Natural killer cell (primary cell): ENCODE measurements at regions of chr11 and their contacts with region 1.

Region 1: DNA sequence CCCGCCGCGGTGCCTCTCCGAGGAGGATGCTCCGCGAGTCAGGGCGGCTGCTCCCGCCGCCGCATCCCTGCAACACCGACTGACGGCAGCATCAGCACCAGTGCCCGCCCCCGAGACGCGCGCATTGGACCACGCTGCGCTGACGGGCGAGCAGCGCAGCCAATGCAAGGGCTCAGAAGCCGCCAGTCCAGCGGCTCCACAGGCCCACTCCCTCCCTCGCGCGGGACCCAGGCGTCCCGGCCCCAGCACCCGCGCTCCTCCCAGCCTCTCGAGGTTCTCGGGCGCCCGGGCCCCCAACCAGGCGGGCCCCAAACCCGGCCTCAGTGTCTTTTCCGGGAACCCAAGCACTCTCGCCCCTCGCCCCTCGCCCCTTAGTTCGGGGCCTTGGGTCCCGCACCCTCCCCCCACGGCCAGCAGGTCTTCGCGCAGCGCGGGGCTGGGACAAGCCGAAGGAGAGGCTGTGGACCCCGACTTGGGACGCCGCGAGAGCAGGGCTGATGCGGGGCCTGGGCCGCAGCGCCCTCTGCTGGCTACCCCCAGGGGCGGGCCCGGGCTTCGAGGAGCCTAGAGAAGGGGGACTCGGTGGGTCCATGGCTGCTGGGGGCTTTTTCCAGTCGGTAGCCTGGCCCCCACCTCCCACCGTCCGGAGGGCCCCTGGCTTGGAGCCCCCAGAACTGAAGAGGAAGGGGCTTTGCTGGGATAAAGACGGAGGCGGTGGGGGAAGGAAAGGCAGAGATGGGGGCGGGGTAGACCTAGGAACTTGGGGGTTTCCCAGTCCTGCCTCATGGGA is at the start of gene NRXN2:
- DNase-seq: peak; percentile 78 to 93
- ATAC-seq: peak; percentile 93 to 96 (median 95)
- H3K4me3 ChIP-seq: peak within 1 kb of the TSS; percentile 82
- H3K4me3 Mint-ChIP-seq: peak within 1 kb of the TSS; percentile 73
- H3K27ac ChIP-seq: peak within 1 kb of the TSS; percentile 82
- H3K27ac Mint-ChIP-seq: peak within 1 kb of the TSS in 1 of 2 donors; percentile 58
- H3K4me1 ChIP-seq: peaks cover 16% of the 10 kb centered on the region
- H3K4me1 Mint-ChIP-seq: peaks cover 8 to 29% of the 10 kb centered on the region in 2 donors
- H3K27me3 ChIP-seq: peaks cover 6% of the 10 kb centered on the region
- H3K27me3 Mint-ChIP-seq: peaks cover 0 to 18% of the 10 kb centered on the region in 2 donors
- CTCF ChIP-seq: peak; percentile 99
- total RNA-seq, gene NRXN2: 2.9 to 9.6 (median 7.7) TPM

Region 2: DNA sequence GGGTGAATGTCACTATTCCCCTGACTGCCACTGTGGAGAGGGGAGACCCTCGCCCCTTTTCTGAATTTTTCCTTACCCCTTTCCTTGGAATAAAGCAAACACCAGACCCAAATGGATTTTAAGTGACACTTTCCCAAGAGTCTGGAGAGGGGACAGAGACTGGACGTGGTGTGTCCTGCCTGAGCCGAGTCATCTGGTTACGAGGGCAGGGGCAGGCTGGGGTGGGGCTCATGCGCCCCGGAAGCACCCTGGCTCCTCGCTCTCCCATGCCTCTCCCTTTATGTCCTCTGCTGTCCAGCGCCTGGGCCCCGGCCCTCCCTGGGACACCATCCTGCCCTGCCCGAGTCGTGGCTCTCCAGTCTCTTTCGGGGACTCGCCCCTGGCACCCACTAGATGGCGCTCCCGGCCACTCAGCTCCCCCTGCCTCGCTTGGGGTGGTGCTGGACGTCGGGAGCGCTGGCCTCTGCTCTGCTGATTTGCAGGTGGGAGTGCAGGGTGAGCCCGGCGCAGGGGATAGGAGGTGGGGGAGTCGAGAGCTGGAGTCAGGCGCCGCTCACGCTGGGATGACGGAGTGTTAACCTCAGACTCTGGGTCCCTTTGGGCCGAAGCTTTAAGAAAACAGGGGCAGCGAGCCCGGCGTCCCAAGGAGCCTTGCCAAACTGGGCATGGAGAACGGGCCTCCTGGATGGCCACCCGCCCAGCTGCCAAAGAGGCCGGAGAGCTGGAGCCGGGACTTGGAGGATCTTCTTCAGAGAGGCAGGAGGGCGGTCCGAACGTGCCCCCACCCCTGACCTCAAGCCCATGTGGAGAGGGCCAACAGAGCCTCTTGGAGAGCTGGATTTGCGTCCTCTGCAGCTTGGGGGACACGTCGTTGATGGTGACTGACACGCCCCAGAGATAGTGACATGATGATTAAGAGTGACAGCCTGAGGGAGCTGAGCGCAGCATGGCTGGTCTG is 274.4 kb before region 1 on chr11:
- intact Hi-C with region 1: loop called (anchors 5 kb)
- DNase-seq: peak; percentile 72 to 80
- ATAC-seq: peak; percentile 80 to 85 (median 83)
- H3K4me3 ChIP-seq: peak overlapping the region; percentile 15
- H3K4me3 Mint-ChIP-seq: peak overlapping the region; percentile 79
- H3K27ac ChIP-seq: no peak overlapping the region
- H3K27ac Mint-ChIP-seq: peak overlapping the region in 1 of 2 donors; percentile 75
- H3K4me1 ChIP-seq: peaks cover 22% of the 10 kb centered on the region
- H3K4me1 Mint-ChIP-seq: peaks cover 14 to 19% of the 10 kb centered on the region in 2 donors
- H3K27me3 ChIP-seq: no peaks in the 10 kb centered on the region
- H3K27me3 Mint-ChIP-seq: peaks cover 5 to 17% of the 10 kb centered on the region in 2 donors
- CTCF ChIP-seq: peak; percentile 54

Region 3: GRCh38 chr11:64489831-64490441 is 233.4 kb before region 1 on chr11:
- intact Hi-C with region 1: loop called (anchors 5 kb)
- DNase-seq: peak; percentile 37 to 59
- ATAC-seq: peak; percentile 49 to 74 (median 68)
- H3K4me3 ChIP-seq: no peak overlapping the region
- H3K4me3 Mint-ChIP-seq: no peak overlapping the region
- H3K27ac ChIP-seq: no peak overlapping the region
- H3K27ac Mint-ChIP-seq: peak overlapping the region in 1 of 2 donors; percentile 54
- H3K4me1 ChIP-seq: peaks cover 4% of the 10 kb centered on the region
- H3K4me1 Mint-ChIP-seq: peaks cover 9 to 18% of the 10 kb centered on the region in 2 donors
- H3K27me3 ChIP-seq: no peaks in the 10 kb centered on the region
- H3K27me3 Mint-ChIP-seq: peaks cover 21 to 49% of the 10 kb centered on the region in 2 donors
- CTCF ChIP-seq: peak; percentile 50

Region 4: DNA sequence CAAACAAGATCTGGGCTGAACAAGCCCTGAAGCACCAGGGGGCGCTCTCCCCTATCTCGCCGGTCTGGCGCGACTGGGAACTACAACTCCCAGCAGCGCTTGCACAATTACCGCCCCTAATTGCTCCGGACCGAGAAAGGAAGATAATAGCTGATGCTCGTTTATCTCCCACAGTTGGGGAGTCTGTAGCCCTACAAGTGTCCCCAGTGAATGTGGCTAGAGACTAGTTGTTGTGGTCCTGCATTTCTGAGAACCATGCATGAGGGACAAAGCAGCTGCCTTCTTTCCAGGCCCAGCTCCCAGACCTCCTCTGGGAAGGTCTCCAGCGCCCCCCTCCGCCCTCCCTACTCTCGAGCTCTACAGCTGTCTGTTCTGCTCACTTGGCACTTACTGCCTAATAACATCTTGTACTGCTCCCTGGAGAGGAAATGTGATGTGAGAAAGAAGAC is 34.8 kb before region 1 on chr11:
- intact Hi-C with region 1: loop called (anchors 1 kb)
- DNase-seq: peak; percentile 85 to 95
- ATAC-seq: peak; percentile 96 to 100 (median 100)
- H3K4me3 ChIP-seq: peak overlapping the region; percentile 8
- H3K4me3 Mint-ChIP-seq: no peak overlapping the region
- H3K27ac ChIP-seq: no peak overlapping the region
- H3K27ac Mint-ChIP-seq: no peak overlapping the region
- H3K4me1 ChIP-seq: peaks cover 12% of the 10 kb centered on the region
- H3K4me1 Mint-ChIP-seq: peaks cover 11 to 28% of the 10 kb centered on the region in 2 donors
- H3K27me3 ChIP-seq: no peaks in the 10 kb centered on the region
- H3K27me3 Mint-ChIP-seq: peaks cover 25 to 37% of the 10 kb centered on the region in 2 donors
- CTCF ChIP-seq: peak; percentile 91